Natural killer cell (primary cell): ENCODE measurements at regions of chr2 and their contacts with region 1.

Region 1: GRCh38 chr2:20650880-20651730 is at the start of gene HS1BP3:
- DNase-seq: peak; percentile 96 to 97
- ATAC-seq: peak; percentile 92 to 98 (median 93)
- H3K4me3 ChIP-seq: peak within 1 kb of the TSS; percentile 81
- H3K4me3 Mint-ChIP-seq: peak within 1 kb of the TSS; percentile 94
- H3K27ac ChIP-seq: peak within 1 kb of the TSS; percentile 88
- H3K27ac Mint-ChIP-seq: peak within 1 kb of the TSS; percentile 92 to 93
- H3K4me1 ChIP-seq: peaks cover 30% of the 10 kb centered on the region
- H3K4me1 Mint-ChIP-seq: peaks cover 42 to 49% of the 10 kb centered on the region in 2 donors
- H3K27me3 ChIP-seq: no peaks in the 10 kb centered on the region
- H3K27me3 Mint-ChIP-seq: peaks cover 6 to 7% of the 10 kb centered on the region in 2 donors
- CTCF ChIP-seq: peak; percentile 84
- total RNA-seq, gene HS1BP3: 17.4 to 25.7 (median 22.8) TPM

Region 2: GRCh38 chr2:20350753-20351554 is 300.2 kb before region 1 on chr2 and contains the start of gene PUM2:
- intact Hi-C with region 1: loop called (anchors 2 kb)
- DNase-seq: peak; percentile 92 to 99
- ATAC-seq: peak; percentile 85 to 96 (median 87)
- H3K4me3 ChIP-seq: peak within 1 kb of the TSS; percentile 76
- H3K4me3 Mint-ChIP-seq: no peak within 1 kb of the TSS
- H3K27ac ChIP-seq: peak within 1 kb of the TSS; percentile 95
- H3K27ac Mint-ChIP-seq: no peak within 1 kb of the TSS
- H3K4me1 ChIP-seq: peaks cover 30% of the 10 kb centered on the region
- H3K4me1 Mint-ChIP-seq: peaks cover 32 to 37% of the 10 kb centered on the region in 2 donors
- H3K27me3 ChIP-seq: no peaks in the 10 kb centered on the region
- H3K27me3 Mint-ChIP-seq: no peaks in the 10 kb centered on the region
- CTCF ChIP-seq: no peak
- total RNA-seq, gene PUM2: 115 to 157 (median 130) TPM

Region 3: GRCh38 chr2:20551260-20551944 is 99.7 kb before region 1 on chr2:
- intact Hi-C with region 1: no loop called
- DNase-seq: no peak
- ATAC-seq: no peak
- H3K4me3 ChIP-seq: no peak overlapping the region
- H3K4me3 Mint-ChIP-seq: no peak overlapping the region
- H3K27ac ChIP-seq: no peak overlapping the region
- H3K27ac Mint-ChIP-seq: no peak overlapping the region
- H3K4me1 ChIP-seq: no peaks in the 10 kb centered on the region
- H3K4me1 Mint-ChIP-seq: peaks cover 5 to 9% of the 10 kb centered on the region in 2 donors
- H3K27me3 ChIP-seq: no peaks in the 10 kb centered on the region
- H3K27me3 Mint-ChIP-seq: peaks cover 0 to 3% of the 10 kb centered on the region in 2 donors
- CTCF ChIP-seq: no peak

Region 4: GRCh38 chr2:20578895-20579825 is 71.9 kb before region 1 on chr2:
- intact Hi-C with region 1: loop called (anchors 5 kb)
- DNase-seq: no peak
- ATAC-seq: no peak
- H3K4me3 ChIP-seq: no peak overlapping the region
- H3K4me3 Mint-ChIP-seq: no peak overlapping the region
- H3K27ac ChIP-seq: no peak overlapping the region
- H3K27ac Mint-ChIP-seq: no peak overlapping the region
- H3K4me1 ChIP-seq: peaks cover 20% of the 10 kb centered on the region
- H3K4me1 Mint-ChIP-seq: peaks cover 17 to 18% of the 10 kb centered on the region in 2 donors
- H3K27me3 ChIP-seq: no peaks in the 10 kb centered on the region
- H3K27me3 Mint-ChIP-seq: no peaks in the 10 kb centered on the region
- CTCF ChIP-seq: no peak

Region 5: GRCh38 chr2:20666304-20667150 is 15.4 kb after region 1 on chr2 and contains the start of gene GDF7:
- intact Hi-C with region 1: no loop called
- DNase-seq: peak in 1 of 2 donors; percentile 50
- ATAC-seq: peak; percentile 34 to 67 (median 62)
- H3K4me3 ChIP-seq: peak within 1 kb of the TSS; percentile 35
- H3K4me3 Mint-ChIP-seq: peak within 1 kb of the TSS; percentile 81
- H3K27ac ChIP-seq: no peak within 1 kb of the TSS
- H3K27ac Mint-ChIP-seq: no peak within 1 kb of the TSS
- H3K4me1 ChIP-seq: peaks cover 32% of the 10 kb centered on the region
- H3K4me1 Mint-ChIP-seq: peaks cover 0 to 6% of the 10 kb centered on the region in 2 donors
- H3K27me3 ChIP-seq: peaks cover 59% of the 10 kb centered on the region
- H3K27me3 Mint-ChIP-seq: peaks cover 48 to 58% of the 10 kb centered on the region in 2 donors
- CTCF ChIP-seq: no peak
- total RNA-seq, gene GDF7: 0.02 to 0.10 (median 0.05) TPM

Region 6: GRCh38 chr2:20698916-20699613 is 48.0 kb after region 1 on chr2:
- intact Hi-C with region 1: no loop called
- DNase-seq: no peak
- ATAC-seq: no peak
- H3K4me3 ChIP-seq: no peak overlapping the region
- H3K4me3 Mint-ChIP-seq: no peak overlapping the region
- H3K27ac ChIP-seq: no peak overlapping the region
- H3K27ac Mint-ChIP-seq: peak overlapping the region in 1 of 2 donors; percentile 10
- H3K4me1 ChIP-seq: no peaks in the 10 kb centered on the region
- H3K4me1 Mint-ChIP-seq: peaks cover 12 to 13% of the 10 kb centered on the region in 2 donors
- H3K27me3 ChIP-seq: no peaks in the 10 kb centered on the region
- H3K27me3 Mint-ChIP-seq: no peaks in the 10 kb centered on the region
- CTCF ChIP-seq: no peak